ENCODE measurements at regions of chr18 and their contacts with region 1.

Region 1: GRCh38 chr18:72336786-72337185 is 207.4 kb downstream of the CBLN2 start:
- DNase-seq: no peak
- H3K4me3 ChIP-seq: no peak overlapping the region
- H3K27ac ChIP-seq: no peak overlapping the region
- H3K4me1 ChIP-seq: no peaks in the 10 kb centered on the region
- H3K27me3 ChIP-seq: no peaks in the 10 kb centered on the region
- CTCF ChIP-seq: no peak
- EP300 ChIP-seq: no peak
- POLR2A ChIP-seq: no peak

Region 2: GRCh38 chr18:72283148-72283925 is 53.4 kb before region 1 on chr18:
- intact Hi-C with region 1: loop called (anchors 2 kb)
- DNase-seq: no peak
- H3K4me3 ChIP-seq: no peak overlapping the region
- H3K27ac ChIP-seq: no peak overlapping the region
- H3K4me1 ChIP-seq: no peaks in the 10 kb centered on the region
- H3K27me3 ChIP-seq: no peaks in the 10 kb centered on the region
- CTCF ChIP-seq: no peak
- EP300 ChIP-seq: no peak
- POLR2A ChIP-seq: no peak

Region 3: GRCh38 chr18:72502671-72503431 is 166.1 kb after region 1 on chr18:
- intact Hi-C with region 1: no loop called
- DNase-seq: no peak
- H3K4me3 ChIP-seq: no peak overlapping the region
- H3K27ac ChIP-seq: no peak overlapping the region
- H3K4me1 ChIP-seq: no peaks in the 10 kb centered on the region
- H3K27me3 ChIP-seq: peaks cover 0 to 3% (median 0%) of the 10 kb centered on the region in 4 donors
- CTCF ChIP-seq: no peak
- EP300 ChIP-seq: no peak
- POLR2A ChIP-seq: no peak

Measured in esophagus muscularis mucosa (tissue), 4 donors.